Heart right ventricle (tissue), 16 donors: ENCODE measurements at regions of chr1 and their contacts with region 1.

Region 1: GRCh38 chr1:59699227-59699847 is 115.4 kb upstream of the HOOK1 start:
- DNase-seq: no peak
- ATAC-seq: peak in 7 of 8 donors; percentile 34 to 67 (median 41)
- H3K4me3 ChIP-seq: no peak overlapping the region
- H3K27ac ChIP-seq: peak overlapping the region in 2 of 10 donors; percentile 19 to 68
- H3K4me1 ChIP-seq: peaks cover 6 to 58% (median 29%) of the 10 kb centered on the region in 9 donors
- H3K27me3 ChIP-seq: no peaks in the 10 kb centered on the region
- CTCF ChIP-seq: peak; percentile 90 to 98 (median 94)

Region 2: DNA sequence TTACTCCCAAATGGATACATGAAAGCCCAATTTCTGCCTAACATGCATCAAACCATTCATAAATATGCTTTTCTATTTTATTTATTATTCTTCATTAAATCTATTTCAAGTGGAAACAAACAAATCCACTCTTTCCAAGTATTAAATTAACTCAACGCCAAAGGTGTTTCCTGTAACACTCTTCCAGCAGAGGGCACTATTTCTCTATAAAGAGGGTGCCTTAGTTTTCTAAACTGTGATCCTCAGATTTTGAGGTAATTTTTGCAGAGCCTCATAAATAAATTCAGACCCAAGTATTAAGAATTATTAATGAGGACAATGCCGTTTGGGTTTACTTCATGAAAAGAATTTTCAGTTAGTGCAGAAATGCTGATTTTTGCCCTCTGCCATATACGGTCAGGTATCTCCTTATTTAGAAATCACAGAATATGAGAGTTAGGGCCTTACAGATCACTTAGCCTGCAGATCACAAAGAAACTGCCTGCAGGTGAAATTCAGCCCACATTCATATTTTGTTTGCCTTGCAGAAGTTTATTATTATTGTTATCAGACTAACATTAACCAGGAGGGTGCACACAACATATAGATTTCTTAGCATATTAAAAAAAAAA is 959.4 kb before region 1 on chr1:
- intact Hi-C with region 1: loop called (anchors 1 to 5 kb)
- DNase-seq: peak in 1 of 2 donors; percentile 52
- ATAC-seq: peak in 6 of 8 donors; percentile 49 to 76 (median 64)
- H3K4me3 ChIP-seq: no peak overlapping the region
- H3K27ac ChIP-seq: no peak overlapping the region
- H3K4me1 ChIP-seq: peaks cover 0 to 24% (median 3%) of the 10 kb centered on the region in 9 donors
- H3K27me3 ChIP-seq: no peaks in the 10 kb centered on the region
- CTCF ChIP-seq: peak; percentile 73 to 95 (median 86)

Region 3: GRCh38 chr1:59057211-59057694 is 642.1 kb before region 1 on chr1:
- intact Hi-C with region 1: loop called in 2 of 10 experiments (anchors 10 kb)
- DNase-seq: peak; percentile 80 to 87
- ATAC-seq: peak; percentile 89 to 93 (median 90)
- H3K4me3 ChIP-seq: no peak overlapping the region
- H3K27ac ChIP-seq: peak overlapping the region in 9 of 10 donors; percentile 6 to 66 (median 60)
- H3K4me1 ChIP-seq: peaks cover 7 to 37% (median 31%) of the 10 kb centered on the region in 9 donors
- H3K27me3 ChIP-seq: no peaks in the 10 kb centered on the region
- CTCF ChIP-seq: peak in 2 of 9 donors; percentile 30 to 32

Region 4: DNA sequence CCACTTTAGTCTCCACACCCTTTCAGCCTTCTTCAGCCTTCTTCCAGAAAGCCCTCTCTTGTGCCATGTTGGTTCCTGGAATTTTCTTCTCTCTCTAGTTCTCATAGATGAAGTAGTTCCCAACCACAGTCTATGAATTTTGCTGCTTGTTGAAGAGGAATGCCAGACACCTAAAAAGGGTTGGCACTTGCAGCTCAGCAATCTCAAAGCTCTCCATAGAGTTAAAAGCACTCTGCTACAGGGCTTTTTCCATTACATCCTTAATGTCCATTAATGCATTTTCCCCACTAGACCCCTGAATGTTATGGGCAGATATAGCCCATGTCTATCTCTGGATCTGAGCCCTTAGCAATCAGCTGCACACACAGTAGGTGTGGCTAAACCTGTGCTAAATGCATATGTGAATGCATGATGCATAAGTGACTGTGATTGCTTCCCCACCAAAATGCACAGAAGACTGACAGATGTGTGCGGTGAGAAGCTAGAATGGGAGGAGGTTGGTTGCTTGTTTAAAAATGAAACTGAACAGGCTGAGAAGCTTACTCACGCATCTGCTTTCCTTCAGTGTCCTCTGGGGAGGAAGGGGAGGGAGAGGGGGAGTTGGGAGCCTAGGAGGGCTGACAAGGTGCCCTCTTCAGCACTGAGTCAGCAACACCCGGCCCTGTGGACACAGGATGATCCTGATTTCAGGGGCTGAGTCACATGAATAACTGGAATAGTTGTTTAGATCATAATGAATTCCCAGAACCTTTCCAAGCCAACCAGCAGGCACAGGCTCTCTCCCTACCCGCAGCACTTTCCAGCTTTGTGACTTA is 548.6 kb before region 1 on chr1:
- intact Hi-C with region 1: loop called in 3 of 10 experiments (anchors 10 kb)
- DNase-seq: peak; percentile 67 to 86
- ATAC-seq: peak; percentile 85 to 98 (median 94)
- H3K4me3 ChIP-seq: peak overlapping the region in 6 of 10 donors; percentile 1 to 39 (median 21)
- H3K27ac ChIP-seq: peak overlapping the region; percentile 49 to 89 (median 78)
- H3K4me1 ChIP-seq: peaks cover 9 to 44% (median 36%) of the 10 kb centered on the region in 9 donors
- H3K27me3 ChIP-seq: no peaks in the 10 kb centered on the region
- CTCF ChIP-seq: no peak

Region 5: GRCh38 chr1:59316497-59317128 is 382.7 kb before region 1 on chr1:
- intact Hi-C with region 1: loop called in 1 of 10 experiments (anchors 10 kb)
- DNase-seq: no peak
- ATAC-seq: peak in 6 of 8 donors; percentile 19 to 55 (median 40)
- H3K4me3 ChIP-seq: peak overlapping the region in 6 of 10 donors; percentile 3 to 26 (median 9)
- H3K27ac ChIP-seq: peak overlapping the region in 8 of 10 donors; percentile 15 to 67 (median 41)
- H3K4me1 ChIP-seq: peaks cover 0 to 28% (median 8%) of the 10 kb centered on the region in 9 donors
- H3K27me3 ChIP-seq: no peaks in the 10 kb centered on the region
- CTCF ChIP-seq: no peak

Region 6: DNA sequence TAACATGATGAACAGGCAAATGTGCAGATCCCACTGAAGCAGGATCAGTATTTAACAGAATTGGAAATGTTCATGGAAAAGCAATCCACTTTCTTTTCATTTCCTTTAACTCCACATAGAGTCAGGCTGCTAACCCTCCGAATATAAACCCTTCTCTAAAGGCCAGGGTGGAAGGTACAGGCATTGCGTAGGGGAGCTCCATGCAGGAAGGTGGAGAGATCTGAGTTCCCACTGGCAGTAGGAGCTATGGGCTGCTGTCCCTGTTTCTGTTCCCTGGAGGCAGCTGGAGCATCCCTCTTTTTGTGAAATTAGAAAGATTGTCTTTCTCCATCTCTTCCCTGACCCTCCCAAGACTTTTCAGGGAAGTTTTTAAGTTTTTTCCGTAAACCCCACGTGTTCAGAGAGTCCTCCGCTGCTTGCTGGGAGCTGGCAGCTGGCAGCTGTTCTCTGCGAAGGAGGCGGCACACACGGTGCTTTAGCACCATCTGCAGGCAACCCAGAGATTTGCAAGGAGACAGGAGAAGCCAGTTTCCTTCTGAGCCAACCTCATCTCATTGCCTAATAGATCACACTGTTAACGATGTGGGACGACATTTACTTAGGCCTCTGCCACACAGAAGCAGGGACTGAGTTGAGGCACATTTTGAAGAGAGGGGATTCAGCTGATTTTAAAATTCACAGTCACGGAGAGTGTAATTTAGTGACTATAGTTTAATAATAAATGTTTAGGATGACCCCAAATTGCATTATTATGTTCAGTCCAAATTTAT is 60.0 kb after region 1 on chr1:
- intact Hi-C with region 1: loop called in 4 of 10 experiments (anchors 1 to 10 kb)
- DNase-seq: peak; percentile 76 to 79
- ATAC-seq: peak; percentile 92 to 96 (median 94)
- H3K4me3 ChIP-seq: peak overlapping the region in 9 of 10 donors; percentile 14 to 42 (median 29)
- H3K27ac ChIP-seq: peak overlapping the region in 9 of 10 donors; percentile 13 to 75 (median 55)
- H3K4me1 ChIP-seq: peaks cover 0 to 16% (median 7%) of the 10 kb centered on the region in 9 donors
- H3K27me3 ChIP-seq: no peaks in the 10 kb centered on the region
- CTCF ChIP-seq: peak; percentile 92 to 99 (median 96)

Region 7: DNA sequence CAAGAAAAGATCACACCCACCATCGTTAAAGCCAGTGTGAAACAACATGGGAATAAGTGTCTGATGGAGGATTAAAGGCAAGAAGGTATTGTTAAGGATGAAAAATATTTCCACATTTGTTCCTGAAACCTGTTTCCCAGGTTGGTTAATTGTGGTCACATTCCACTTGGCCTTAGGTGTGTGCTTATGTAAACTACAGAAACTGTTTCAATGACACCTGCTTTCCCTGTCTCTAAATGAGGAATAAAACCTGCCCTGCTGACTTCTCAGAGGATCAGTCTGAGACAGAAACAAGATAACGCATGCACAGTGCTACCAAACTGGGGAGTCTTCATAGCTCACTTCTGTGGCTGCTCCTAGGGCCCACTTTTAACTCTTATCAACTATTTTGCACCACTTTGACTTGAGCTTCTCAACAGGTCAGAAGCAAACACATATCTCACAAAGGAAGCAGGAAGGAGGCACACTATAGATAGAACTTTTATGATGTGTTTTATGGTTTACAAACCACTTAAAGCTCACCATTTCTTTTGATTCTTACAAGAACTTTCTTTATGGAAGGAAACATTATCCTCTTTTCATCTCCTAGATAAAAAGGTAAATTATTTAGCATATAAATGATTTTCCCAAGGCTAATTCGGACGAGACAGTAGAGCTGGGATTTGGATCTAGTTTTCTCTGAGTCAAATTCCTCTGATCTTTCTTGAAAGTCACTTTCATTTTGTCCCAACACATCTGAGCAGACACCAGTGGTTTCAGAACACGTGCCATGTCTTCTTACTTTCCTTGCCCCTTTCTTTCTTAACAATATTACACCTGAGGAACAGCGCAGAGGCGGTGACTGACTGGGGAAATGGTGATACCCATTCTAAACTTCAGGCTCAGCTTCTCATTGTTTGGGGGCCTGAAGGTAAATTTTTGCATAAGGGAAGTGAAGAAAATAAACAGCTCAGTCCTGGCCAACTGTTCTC is 193.8 kb after region 1 on chr1:
- intact Hi-C with region 1: no loop called
- DNase-seq: no peak
- ATAC-seq: no peak
- H3K4me3 ChIP-seq: no peak overlapping the region
- H3K27ac ChIP-seq: no peak overlapping the region
- H3K4me1 ChIP-seq: peaks cover 0 to 17% (median 8%) of the 10 kb centered on the region in 9 donors
- H3K27me3 ChIP-seq: no peaks in the 10 kb centered on the region
- CTCF ChIP-seq: no peak